Mammary epithelial cell (primary cell): ENCODE measurements at regions of chr2 and their contacts with region 1.

Region 1: DNA sequence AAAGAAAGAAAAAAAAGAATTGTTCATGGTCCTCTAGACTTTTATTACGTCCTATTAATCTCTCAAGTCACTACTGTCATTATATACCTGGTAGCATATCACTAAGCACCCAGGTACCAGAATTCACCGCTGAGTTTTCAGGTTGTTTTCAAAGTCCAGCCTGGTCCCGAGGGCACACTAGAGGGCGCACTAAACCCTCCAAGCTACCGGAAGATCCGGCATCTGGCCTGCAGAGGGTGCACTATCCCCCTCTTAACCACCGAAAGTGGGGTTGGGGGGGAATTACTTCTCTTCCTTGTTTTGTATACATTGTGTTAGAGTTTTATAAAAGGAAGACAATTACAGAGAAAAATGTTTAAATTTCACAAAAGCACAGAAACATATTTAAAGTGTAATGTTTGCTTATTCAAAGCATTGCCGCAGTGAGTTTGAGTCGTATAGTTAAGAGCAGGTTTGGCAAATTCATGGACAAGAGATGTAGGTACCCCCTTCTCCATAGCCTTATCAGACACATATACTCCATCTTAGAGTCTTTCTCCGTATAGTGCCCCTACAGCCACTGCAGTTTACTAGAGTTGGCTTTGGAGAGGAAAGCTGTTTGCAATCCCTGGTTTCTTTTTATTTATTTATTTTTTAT is 19.2 kb downstream of the MOGAT1 start:
- DNase-seq: peak; percentile 45
- H3K4me3 ChIP-seq: no peak overlapping the region
- H3K27ac ChIP-seq: no peak overlapping the region
- H3K4me1 ChIP-seq: no peaks in the 10 kb centered on the region
- H3K27me3 ChIP-seq: no peaks in the 10 kb centered on the region
- CTCF ChIP-seq: peak; percentile 100

Region 2: DNA sequence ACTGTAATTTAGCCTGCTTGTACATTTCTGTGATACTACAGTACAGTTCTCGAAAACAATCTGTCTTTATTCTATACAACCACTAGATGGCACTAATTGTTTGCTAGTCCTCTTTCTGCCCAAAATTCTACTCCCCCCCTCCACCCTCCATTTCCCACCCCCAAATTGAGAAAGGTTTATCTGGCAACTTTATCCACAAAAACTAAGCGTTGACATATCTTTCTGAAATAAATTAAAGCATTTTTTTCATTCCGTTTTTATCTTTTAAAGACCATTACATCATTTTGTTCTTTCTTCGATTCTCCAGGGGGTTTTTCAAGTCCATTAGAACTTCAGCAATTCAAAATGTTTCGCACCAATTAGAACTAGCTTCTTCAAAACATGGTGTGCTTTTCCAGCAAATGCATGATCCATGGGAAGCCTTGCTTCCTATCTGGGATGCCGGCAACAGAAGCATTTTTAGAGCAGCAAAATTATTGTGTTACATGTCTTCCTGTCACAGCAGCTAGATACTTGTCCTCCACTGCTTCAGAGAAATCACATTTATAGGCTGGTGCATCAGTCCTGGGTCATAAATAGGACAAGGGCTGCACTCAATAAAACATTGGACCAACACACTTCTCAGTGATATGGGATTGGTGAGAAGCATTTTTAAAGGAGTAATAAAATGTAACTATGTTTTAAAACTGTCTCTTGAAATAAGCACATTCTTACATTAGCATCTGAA is 633.2 kb before region 1 on chr2:
- CTCF ChIA-PET with region 1: no interaction called
- dilution Hi-C with region 1: no loop called
- in situ Hi-C with region 1: no loop called
- intact Hi-C with region 1: loop called (anchors 2 kb)
- DNase-seq: no peak
- H3K4me3 ChIP-seq: no peak overlapping the region
- H3K27ac ChIP-seq: no peak overlapping the region
- H3K4me1 ChIP-seq: no peaks in the 10 kb centered on the region
- H3K27me3 ChIP-seq: peaks cover 5% of the 10 kb centered on the region
- CTCF ChIP-seq: peak; percentile 54 to 62

Region 3: GRCh38 chr2:222622910-222623309 is 67.8 kb before region 1 on chr2:
- CTCF ChIA-PET with region 1: no interaction called
- dilution Hi-C with region 1: no loop called
- in situ Hi-C with region 1: no loop called
- intact Hi-C with region 1: no loop called
- DNase-seq: no peak
- H3K4me3 ChIP-seq: no peak overlapping the region
- H3K27ac ChIP-seq: no peak overlapping the region
- H3K4me1 ChIP-seq: no peaks in the 10 kb centered on the region
- H3K27me3 ChIP-seq: no peaks in the 10 kb centered on the region
- CTCF ChIP-seq: no peak

Region 4: DNA sequence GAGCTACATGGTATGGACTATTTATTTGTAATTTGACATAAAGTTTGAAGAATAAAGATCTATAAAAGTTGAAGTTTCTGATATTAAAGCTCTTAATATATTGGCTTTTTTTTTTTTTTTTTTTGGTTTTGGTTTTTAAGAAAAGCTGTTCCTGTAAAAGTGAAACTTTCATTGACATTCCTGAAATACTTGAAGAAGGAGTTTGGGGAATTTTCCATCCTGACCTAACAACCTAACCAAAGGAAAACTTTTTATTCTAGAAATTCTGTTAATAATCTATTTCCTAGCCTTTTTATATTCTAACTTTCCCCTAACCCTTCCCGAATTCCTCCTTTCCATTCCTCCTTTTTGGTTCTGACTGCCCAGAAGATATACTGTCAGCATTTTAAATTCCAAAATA is 253.9 kb after region 1 on chr2:
- CTCF ChIA-PET with region 1: interaction called, 14 read pairs
- dilution Hi-C with region 1: no loop called
- in situ Hi-C with region 1: no loop called
- intact Hi-C with region 1: loop called (anchors 1 kb)
- DNase-seq: no peak
- H3K4me3 ChIP-seq: no peak overlapping the region
- H3K27ac ChIP-seq: no peak overlapping the region
- H3K4me1 ChIP-seq: peaks cover 13% of the 10 kb centered on the region
- H3K27me3 ChIP-seq: no peaks in the 10 kb centered on the region
- CTCF ChIP-seq: no peak

Region 5: GRCh38 chr2:222959336-222959735 is 268.7 kb after region 1 on chr2:
- CTCF ChIA-PET with region 1: no interaction called
- dilution Hi-C with region 1: no loop called
- in situ Hi-C with region 1: no loop called
- intact Hi-C with region 1: loop called (anchors 1 kb)
- DNase-seq: peak; percentile 83
- H3K4me3 ChIP-seq: no peak overlapping the region
- H3K27ac ChIP-seq: peak overlapping the region; percentile 15
- H3K4me1 ChIP-seq: peaks cover 22% of the 10 kb centered on the region
- H3K27me3 ChIP-seq: no peaks in the 10 kb centered on the region
- CTCF ChIP-seq: peak; percentile 58 to 65